Esophagus muscularis mucosa (tissue), 4 donors: ENCODE measurements at regions of chr9 and their contacts with region 1.

Region 1: GRCh38 chr9:136849038-136849959 is at the start of gene PHPT1:
- DNase-seq: peak; percentile 100
- H3K4me3 ChIP-seq: peak within 1 kb of the TSS; percentile 57 to 78 (median 74)
- H3K27ac ChIP-seq: peak within 1 kb of the TSS; percentile 88 to 95 (median 90)
- H3K4me1 ChIP-seq: peaks cover 43 to 66% (median 56%) of the 10 kb centered on the region in 4 donors
- H3K27me3 ChIP-seq: peaks cover 0 to 37% (median 24%) of the 10 kb centered on the region in 4 donors
- CTCF ChIP-seq: peak in 1 of 3 experiments; percentile 29
- EP300 ChIP-seq: no peak
- POLR2A ChIP-seq: peak; percentile 73
- total RNA-seq, gene PHPT1: 43.4 to 84.1 (median 53.9) TPM

Region 2: DNA sequence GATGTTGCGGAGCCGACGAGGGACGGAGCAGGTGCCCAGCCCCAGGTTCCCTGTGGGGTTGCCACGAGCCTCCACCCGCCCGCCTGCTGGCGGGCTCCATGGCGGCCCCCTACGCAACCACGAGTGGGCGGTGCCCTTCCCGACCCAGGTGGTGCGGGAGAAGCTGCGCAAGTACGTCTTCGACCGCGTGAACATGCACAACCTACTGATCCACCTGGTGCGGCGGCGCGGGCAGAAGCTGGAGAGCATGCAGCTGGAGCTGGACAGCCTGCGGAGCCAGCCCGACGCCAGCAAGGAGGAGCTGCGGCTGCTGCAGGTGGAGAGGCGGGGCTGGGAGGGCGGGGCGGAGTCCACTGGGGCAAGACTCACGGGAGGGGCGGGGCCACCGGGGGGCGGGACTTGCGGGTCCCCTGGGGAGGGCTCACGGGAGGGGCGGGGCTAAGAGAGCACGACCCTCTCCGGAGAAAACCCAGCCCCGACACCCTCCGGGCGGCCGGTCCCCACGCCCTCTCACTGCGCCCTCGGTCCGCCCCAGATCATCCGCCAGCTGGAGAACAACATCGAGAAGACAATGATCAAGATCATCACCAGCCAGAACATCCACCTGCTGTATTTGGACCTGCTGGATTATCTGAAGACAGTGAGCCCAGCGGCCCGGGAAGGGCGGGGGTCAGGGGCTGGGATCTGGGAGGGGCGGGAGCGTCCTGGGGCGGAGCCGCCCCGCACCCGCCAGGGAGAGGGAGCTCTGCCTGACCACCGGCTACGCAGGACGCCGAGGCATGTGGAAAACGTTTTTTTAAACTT is 49.2 kb before region 1 on chr9:
- intact Hi-C with region 1: loop called (anchors 5 kb)
- DNase-seq: no peak
- H3K4me3 ChIP-seq: peak overlapping the region; percentile 38 to 46 (median 44)
- H3K27ac ChIP-seq: no peak overlapping the region
- H3K4me1 ChIP-seq: peaks cover 21 to 32% (median 23%) of the 10 kb centered on the region in 4 donors
- H3K27me3 ChIP-seq: peaks cover 6 to 72% (median 52%) of the 10 kb centered on the region in 4 donors
- CTCF ChIP-seq: no peak
- EP300 ChIP-seq: no peak
- POLR2A ChIP-seq: no peak